Left cardiac atrium (tissue), 4 donors: ENCODE measurements at regions of chr14 and their contacts with region 1.

Region 1: DNA sequence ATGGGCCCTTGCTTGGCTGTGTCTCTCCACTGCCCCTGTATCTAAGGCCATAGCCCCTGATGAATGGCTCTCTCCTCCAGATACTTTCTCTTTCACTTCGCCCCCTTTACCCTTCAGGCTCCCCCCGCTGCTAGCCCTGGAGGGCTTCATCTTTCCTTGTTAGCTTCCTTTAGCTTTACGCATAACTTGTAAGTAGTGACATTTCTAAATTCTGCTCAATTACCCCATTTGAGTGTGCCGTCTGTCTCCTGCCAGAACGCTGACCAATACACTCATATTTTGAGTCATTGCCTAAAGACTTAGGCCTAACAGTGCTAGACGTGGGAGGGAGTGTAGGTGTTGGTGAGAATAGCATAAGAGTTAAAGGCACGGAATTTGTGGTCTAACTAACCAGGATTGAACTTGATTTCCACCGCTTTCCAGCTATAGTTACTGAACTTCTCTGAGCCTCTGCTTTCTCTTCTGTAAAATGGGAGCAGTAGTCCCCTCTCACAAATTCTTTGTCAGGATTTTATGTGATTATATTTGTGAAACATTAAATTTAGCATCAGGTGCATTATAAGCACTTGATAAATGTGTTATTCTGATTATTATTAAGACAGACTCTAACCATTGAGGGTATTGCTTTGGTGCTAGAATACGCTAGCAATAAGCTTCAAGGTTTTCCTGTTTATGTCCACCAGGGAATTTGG is 129.3 kb downstream of the ZFP36L1 start:
- DNase-seq: no peak
- ATAC-seq: peak in 1 of 2 donors; percentile 7

Region 2: DNA sequence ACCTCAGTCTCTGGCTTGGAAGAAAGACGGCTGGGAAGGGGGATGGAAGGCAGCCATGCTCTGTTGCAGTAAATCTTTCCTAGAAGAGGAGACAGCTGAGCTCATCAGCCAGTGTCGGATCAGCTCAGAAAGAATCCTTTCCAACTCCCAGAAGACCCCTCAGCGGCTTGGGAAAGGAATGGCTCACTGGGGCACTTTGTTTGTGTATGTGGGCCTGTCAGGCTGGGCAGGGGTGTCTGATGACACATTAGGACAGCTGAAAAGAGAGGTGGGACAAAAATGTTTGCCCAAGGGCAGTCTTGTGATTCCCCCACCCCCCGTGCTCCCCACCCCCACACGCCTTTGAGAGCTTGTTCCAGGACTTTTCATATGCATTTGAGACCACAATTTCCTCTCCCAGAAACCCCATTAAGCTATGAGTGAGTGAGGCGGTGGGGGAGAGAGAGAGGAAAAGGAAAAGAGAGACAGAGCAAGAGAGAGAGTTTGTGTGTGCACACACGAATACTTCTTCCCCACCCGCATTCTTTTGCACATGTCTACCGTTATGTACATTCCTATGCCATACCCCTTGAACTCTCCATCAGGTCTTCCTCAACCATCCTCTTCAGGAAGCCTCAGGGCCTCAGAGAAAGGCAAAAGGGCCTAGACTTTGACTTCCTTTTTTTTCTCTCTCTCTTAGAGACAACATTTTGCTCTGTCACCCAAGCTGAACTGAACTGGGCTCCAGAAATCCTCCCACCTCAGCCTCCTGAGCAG is 69.5 kb before region 1 on chr14:
- intact Hi-C with region 1: no loop called
- DNase-seq: no peak
- ATAC-seq: no peak

Region 3: DNA sequence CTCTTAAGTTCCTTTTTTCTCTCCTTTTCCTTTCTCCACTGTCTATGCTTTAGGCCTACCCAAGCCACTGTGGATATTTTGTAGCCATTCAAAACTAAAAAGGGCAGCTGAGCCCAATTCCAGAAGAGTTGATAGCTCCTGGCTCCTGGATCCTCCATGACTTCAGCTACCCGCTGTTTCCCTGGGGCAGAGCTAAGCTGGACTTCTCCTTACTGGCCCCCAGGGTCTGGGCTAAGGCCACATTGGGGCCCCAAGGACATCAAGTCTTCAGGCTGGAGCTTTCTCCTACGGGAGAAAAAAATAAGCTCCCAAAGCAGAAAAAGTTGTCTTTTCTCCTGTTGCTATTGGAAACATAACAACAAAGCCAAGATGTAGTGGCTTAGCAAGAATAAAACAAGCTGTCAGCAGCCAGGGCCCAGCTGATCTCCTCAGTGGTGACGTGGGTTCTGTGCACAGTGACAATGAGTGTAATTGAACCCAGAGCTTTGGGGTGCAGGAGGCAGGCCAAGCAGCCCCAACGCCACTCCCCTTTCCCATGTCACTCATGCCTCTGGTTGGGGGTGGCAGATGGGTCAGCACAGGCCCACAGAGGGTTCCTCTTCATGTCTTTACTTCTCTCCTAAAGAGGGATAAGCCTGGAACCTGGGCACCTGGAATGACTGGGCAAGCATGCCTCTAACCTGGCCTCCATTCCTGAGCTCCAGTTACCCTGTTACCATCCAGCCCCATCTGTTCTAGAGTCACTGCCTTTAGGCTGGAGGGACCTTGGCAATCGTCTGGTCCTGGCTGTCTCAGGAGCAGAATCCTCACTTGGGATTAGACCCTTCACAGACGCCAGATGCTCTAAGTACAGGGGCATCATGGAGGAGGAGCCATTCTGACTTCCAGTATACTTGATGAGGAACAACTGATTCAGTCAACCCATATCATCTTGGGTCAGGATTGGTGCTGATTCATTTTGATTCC is 41.8 kb before region 1 on chr14:
- intact Hi-C with region 1: loop called in 1 of 2 experiments (anchors 5 kb)
- DNase-seq: peak; percentile 68
- ATAC-seq: peak; percentile 79 to 82